HCT116 (cell line): ENCODE measurements at regions of chr16 and their contacts with region 1.

Region 1: DNA sequence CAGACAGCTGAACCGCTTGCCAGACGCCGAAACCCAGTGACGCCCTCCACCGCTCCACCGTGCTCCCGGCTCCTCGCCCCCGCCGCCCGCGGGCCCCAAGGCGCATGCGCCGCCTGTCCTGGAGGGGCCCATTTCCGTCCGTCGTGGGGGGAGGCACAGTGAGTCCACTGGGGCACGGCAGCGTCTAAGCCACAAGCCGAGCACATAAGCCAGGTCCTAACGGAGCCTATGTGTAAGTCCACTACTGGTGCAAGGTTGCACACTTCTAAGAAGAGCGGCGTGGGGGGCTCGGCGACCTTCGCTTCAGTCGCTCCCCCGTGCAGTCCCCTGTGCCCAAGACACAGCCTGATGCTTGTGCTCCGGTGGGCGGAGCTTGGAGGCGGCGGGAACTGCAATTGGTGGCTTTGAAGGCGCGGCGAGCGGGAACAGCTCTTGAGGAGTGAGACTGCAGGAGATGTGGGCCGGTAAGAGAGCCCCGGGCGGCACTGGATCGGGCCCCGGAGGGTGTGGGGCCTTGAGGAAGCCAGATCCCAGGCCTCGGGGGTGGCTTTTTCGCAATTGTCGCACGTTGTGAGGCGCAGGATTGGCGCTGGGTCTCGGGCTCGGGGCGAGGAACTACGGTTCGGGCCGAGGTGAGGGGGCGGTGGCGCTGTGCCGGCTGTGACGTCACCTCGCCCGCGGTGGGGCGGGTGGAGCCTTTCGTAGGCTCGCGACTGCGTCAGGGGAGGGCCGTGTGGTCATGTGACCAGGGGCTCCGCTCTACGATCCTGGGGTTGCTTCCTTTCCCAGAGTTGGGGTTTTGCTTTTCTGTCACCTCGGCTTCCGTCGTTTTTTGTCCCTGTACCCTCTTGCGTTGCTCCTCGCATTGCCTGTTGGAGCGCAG is at the starts of genes CENPN and CMC2:
- DNase-seq: peak; percentile 100
- ATAC-seq: peak; percentile 89
- H3K4me3 ChIP-seq: peak within 1 kb of the TSS; percentile 53 to 93
- H3K27ac ChIP-seq: peak within 1 kb of the TSS; percentile 97
- H3K4me1 ChIP-seq: peaks cover 16 to 26% of the 10 kb centered on the region in 2 experiments
- H3K27me3 ChIP-seq: no peaks in the 10 kb centered on the region
- CTCF ChIP-seq: no peak
- POLR2A ChIP-seq: peak; percentile 92
- RAD21 ChIP-seq: no peak
- total RNA-seq, gene CENPN: 76.7 TPM
- total RNA-seq, gene CMC2: 119 TPM

Region 2: GRCh38 chr16:80993307-80993706 is 13.7 kb before region 1 on chr16:
- CTCF ChIA-PET with region 1: interaction called, 13 read pairs
- POLR2A ChIA-PET with region 1: interaction called, 3 read pairs
- RAD21 ChIA-PET with region 1: no interaction called
- intact Hi-C with region 1: no loop called
- DNase-seq: no peak
- ATAC-seq: no peak
- H3K4me3 ChIP-seq: no peak overlapping the region
- H3K27ac ChIP-seq: no peak overlapping the region
- H3K4me1 ChIP-seq: peaks cover 16 to 35% of the 10 kb centered on the region in 2 experiments
- H3K27me3 ChIP-seq: no peaks in the 10 kb centered on the region
- CTCF ChIP-seq: no peak
- POLR2A ChIP-seq: no peak
- RAD21 ChIP-seq: no peak

Region 3: GRCh38 chr16:81198635-81199034 is 191.6 kb after region 1 on chr16:
- CTCF ChIA-PET with region 1: interaction called, 5 read pairs
- POLR2A ChIA-PET with region 1: no interaction called
- RAD21 ChIA-PET with region 1: no interaction called
- intact Hi-C with region 1: loop called (anchors 10 kb)
- DNase-seq: no peak
- ATAC-seq: peak; percentile 84
- H3K4me3 ChIP-seq: no peak overlapping the region
- H3K27ac ChIP-seq: no peak overlapping the region
- H3K4me1 ChIP-seq: peaks cover 0 to 5% of the 10 kb centered on the region in 2 experiments; a peak in 1 of 4 replicates
- H3K27me3 ChIP-seq: no peaks in the 10 kb centered on the region
- CTCF ChIP-seq: peak; percentile 22 to 89 (median 37); a peak in 5 of 6 replicates
- POLR2A ChIP-seq: no peak
- RAD21 ChIP-seq: peak; percentile 90